PC-3 (cell line): ENCODE measurements at regions of chr7 and their contacts with region 1.

Region 1: GRCh38 chr7:55641273-55641691 is 69.0 kb upstream of the VOPP1 start:
- DNase-seq: peak; percentile 87
- ATAC-seq: peak; percentile 98
- H3K4me3 ChIP-seq: no peak overlapping the region
- H3K27ac ChIP-seq: peak overlapping the region; percentile 52
- H3K4me1 ChIP-seq: peaks cover 8% of the 10 kb centered on the region
- H3K27me3 ChIP-seq: no peaks in the 10 kb centered on the region
- CTCF ChIP-seq: peak; percentile 90

Region 2: DNA sequence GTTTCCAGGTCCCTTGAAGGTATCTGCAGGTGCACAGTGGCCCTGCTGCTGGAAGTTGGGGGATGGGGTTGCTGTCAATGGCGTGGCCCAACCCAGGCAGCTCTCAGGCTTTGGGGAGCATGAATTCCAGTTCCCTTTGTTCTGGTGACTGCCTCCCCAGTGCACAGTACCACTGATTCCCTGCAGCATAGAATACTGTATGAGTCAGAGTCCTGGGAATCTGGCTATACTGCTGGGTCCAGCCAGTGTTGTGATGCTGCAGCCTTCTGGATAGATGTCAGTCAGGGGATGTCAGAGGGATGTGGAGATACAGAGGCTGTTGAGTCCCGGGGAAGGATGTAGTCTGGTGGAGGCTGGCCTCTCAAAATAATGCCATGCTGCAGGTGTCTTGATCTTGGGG is 176.9 kb before region 1 on chr7:
- CTCF ChIA-PET with region 1: no interaction called
- POLR2A ChIA-PET with region 1: no interaction called
- intact Hi-C with region 1: no loop called
- DNase-seq: no peak
- ATAC-seq: peak; percentile 59
- H3K4me3 ChIP-seq: no peak overlapping the region
- H3K27ac ChIP-seq: no peak overlapping the region
- H3K4me1 ChIP-seq: no peaks in the 10 kb centered on the region
- H3K27me3 ChIP-seq: no peaks in the 10 kb centered on the region
- CTCF ChIP-seq: no peak

Region 3: GRCh38 chr7:55723621-55723941 is 82.3 kb after region 1 on chr7:
- CTCF ChIA-PET with region 1: interaction called, 4 read pairs
- POLR2A ChIA-PET with region 1: no interaction called
- intact Hi-C with region 1: loop called (anchors 2 kb)
- DNase-seq: no peak
- ATAC-seq: no peak
- H3K4me3 ChIP-seq: no peak overlapping the region
- H3K27ac ChIP-seq: no peak overlapping the region
- H3K4me1 ChIP-seq: no peaks in the 10 kb centered on the region
- H3K27me3 ChIP-seq: no peaks in the 10 kb centered on the region
- CTCF ChIP-seq: no peak

Region 4: GRCh38 chr7:55887821-55888247 is 246.6 kb after region 1 on chr7:
- CTCF ChIA-PET with region 1: no interaction called
- POLR2A ChIA-PET with region 1: no interaction called
- intact Hi-C with region 1: loop called (anchors 5 kb)
- DNase-seq: no peak
- ATAC-seq: no peak
- H3K4me3 ChIP-seq: peak overlapping the region; percentile 72
- H3K27ac ChIP-seq: no peak overlapping the region
- H3K4me1 ChIP-seq: no peaks in the 10 kb centered on the region
- H3K27me3 ChIP-seq: no peaks in the 10 kb centered on the region
- CTCF ChIP-seq: no peak

Region 5: GRCh38 chr7:55964261-55965099 is 323.2 kb after region 1 on chr7 and contains the start of gene NIPSNAP2:
- CTCF ChIA-PET with region 1: interaction called, 8 read pairs
- POLR2A ChIA-PET with region 1: no interaction called
- intact Hi-C with region 1: loop called (anchors 1 kb)
- DNase-seq: peak; percentile 71
- ATAC-seq: peak; percentile 63
- H3K4me3 ChIP-seq: peak within 1 kb of the TSS; percentile 84
- H3K27ac ChIP-seq: peak within 1 kb of the TSS; percentile 73
- H3K4me1 ChIP-seq: peaks cover 15% of the 10 kb centered on the region
- H3K27me3 ChIP-seq: no peaks in the 10 kb centered on the region
- CTCF ChIP-seq: peak; percentile 32; the same call in 1 of the 2 replicates
- total RNA-seq, gene NIPSNAP2: 63.9 and 65.8 TPM in 2 replicates

Region 6: GRCh38 chr7:56003749-56004148 is 362.5 kb after region 1 on chr7:
- CTCF ChIA-PET with region 1: interaction called, 3 read pairs
- POLR2A ChIA-PET with region 1: no interaction called
- intact Hi-C with region 1: loop called (anchors 2 kb)
- DNase-seq: no peak
- ATAC-seq: no peak
- H3K4me3 ChIP-seq: no peak overlapping the region
- H3K27ac ChIP-seq: no peak overlapping the region
- H3K4me1 ChIP-seq: no peaks in the 10 kb centered on the region
- H3K27me3 ChIP-seq: no peaks in the 10 kb centered on the region
- CTCF ChIP-seq: no peak

Region 7: DNA sequence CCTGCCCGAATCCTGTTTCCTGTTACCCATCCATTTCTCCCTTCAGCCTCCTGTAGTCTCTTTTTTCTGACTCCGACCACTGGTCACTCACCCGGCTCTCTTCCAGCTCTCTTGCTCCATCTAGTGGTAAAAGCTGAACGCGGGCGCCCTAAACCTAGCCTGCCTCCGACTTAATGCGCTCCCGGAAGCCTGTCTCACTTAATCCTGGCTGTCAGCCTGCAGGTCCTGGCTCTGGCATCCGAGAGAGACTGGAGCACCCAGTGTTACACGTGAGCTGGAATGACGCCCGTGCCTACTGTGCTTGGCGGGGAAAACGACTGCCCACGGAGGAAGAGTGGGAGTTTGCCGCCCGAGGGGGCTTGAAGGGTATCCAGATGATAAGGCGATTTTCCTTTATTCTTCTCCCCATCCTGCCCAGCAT is 433.1 kb after region 1 on chr7:
- CTCF ChIA-PET with region 1: no interaction called
- POLR2A ChIA-PET with region 1: no interaction called
- intact Hi-C with region 1: loop called (anchors 1 kb)
- DNase-seq: peak; percentile 90
- ATAC-seq: peak; percentile 95
- H3K4me3 ChIP-seq: no peak overlapping the region
- H3K27ac ChIP-seq: no peak overlapping the region
- H3K4me1 ChIP-seq: peaks cover 4% of the 10 kb centered on the region
- H3K27me3 ChIP-seq: no peaks in the 10 kb centered on the region
- CTCF ChIP-seq: peak; percentile 90